Activated B cell treated with CpG ODN at 0.5 μM for 24 hours (primary cell): ENCODE measurements at regions of chr18 and their contacts with region 1.

Region 1: GRCh38 chr18:58125183-58125582 is 81.2 kb downstream of the NEDD4L start:
- DNase-seq: no peak
- ATAC-seq: no peak
- H3K4me3 Mint-ChIP-seq: no peak overlapping the region
- H3K27ac Mint-ChIP-seq: no peak overlapping the region
- H3K4me1 Mint-ChIP-seq: no peaks in the 10 kb centered on the region
- H3K27me3 Mint-ChIP-seq: no peaks in the 10 kb centered on the region
- CTCF ChIP-seq: no peak

Region 2: GRCh38 chr18:57959278-57959677 is 165.9 kb before region 1 on chr18:
- CTCF ChIA-PET with region 1: interaction called, 82 read pairs
- POLR2A ChIA-PET with region 1: interaction called, 7 read pairs
- intact Hi-C with region 1: loop called (anchors 1 kb)
- DNase-seq: no peak
- ATAC-seq: peak; percentile 88
- H3K4me3 Mint-ChIP-seq: no peak overlapping the region
- H3K27ac Mint-ChIP-seq: no peak overlapping the region
- H3K4me1 Mint-ChIP-seq: no peaks in the 10 kb centered on the region
- H3K27me3 Mint-ChIP-seq: no peaks in the 10 kb centered on the region
- CTCF ChIP-seq: no peak

Region 3: GRCh38 chr18:58148954-58149471 is 23.8 kb after region 1 on chr18:
- CTCF ChIA-PET with region 1: no interaction called
- POLR2A ChIA-PET with region 1: no interaction called
- intact Hi-C with region 1: no loop called
- DNase-seq: no peak
- ATAC-seq: peak; percentile 88
- H3K4me3 Mint-ChIP-seq: peak overlapping the region; percentile 67
- H3K27ac Mint-ChIP-seq: peak overlapping the region; percentile 73
- H3K4me1 Mint-ChIP-seq: peaks cover 17% of the 10 kb centered on the region
- H3K27me3 Mint-ChIP-seq: no peaks in the 10 kb centered on the region
- CTCF ChIP-seq: no peak